Caco-2 (cell line): ENCODE measurements at regions of chrX and their contacts with region 1.

Region 1: GRCh38 chrX:40108959-40109287 is 11.2 kb upstream of the BCOR start:
- DNase-seq: peak in 1 of 2 experiments; percentile 61
- H3K4me3 ChIP-seq: peak overlapping the region; percentile 66
- H3K4me3 Mint-ChIP-seq: peak overlapping the region; percentile 76
- H3K27ac Mint-ChIP-seq: no peak overlapping the region
- H3K4me1 ChIP-seq: peaks cover 2% of the 10 kb centered on the region; the same call in 1 of the 2 replicates
- H3K4me1 Mint-ChIP-seq: peaks cover 6% of the 10 kb centered on the region
- H3K27me3 ChIP-seq: no peaks in the 10 kb centered on the region
- H3K27me3 Mint-ChIP-seq: no peaks in the 10 kb centered on the region
- CTCF ChIP-seq: no peak

Region 2: DNA sequence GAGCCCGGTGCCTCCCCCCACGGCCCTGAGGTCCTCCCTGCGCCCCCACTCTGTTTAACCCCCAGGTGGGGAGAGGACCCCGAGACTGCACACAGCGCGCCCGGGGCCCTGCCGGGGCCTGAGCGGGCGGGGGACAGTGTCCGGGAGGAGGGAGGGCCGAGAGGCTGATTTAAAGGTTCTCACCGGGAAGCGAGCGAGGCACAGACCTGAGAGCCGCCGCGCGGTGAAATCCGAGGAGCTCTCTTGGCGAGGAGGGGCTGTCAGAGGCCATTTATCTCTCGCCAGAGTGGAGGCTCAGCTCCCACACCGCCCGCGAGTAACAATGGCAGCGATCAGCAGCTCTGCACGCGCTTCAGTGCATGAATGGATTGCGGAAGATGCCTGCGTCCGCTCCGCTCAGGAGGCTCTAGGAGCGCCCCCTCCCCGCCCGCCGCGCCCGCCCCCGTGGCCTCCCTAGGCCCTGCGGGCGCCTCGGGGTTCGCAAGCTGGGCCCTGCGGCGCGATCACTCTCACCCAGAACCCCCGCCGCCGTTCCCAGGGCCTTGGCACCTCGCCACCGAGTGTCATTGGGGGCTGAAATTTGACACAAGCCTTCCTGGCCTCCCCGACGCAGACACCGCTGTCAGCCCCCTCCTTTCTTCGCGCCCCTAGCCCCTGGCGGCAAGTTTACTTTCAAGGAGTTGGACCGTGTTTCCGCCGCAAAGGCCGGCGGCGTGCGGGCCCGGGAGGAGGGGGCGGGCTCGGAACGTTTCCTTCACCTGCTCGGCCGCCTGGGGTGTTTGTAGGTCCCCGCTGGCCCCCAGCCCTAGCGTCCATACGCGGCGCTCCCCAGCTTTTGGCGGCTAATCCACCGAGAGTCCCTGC is 37.6 kb after region 1 on chrX:
- CTCF ChIA-PET with region 1: interaction called, 3 read pairs
- POLR2A ChIA-PET with region 1: no interaction called
- intact Hi-C with region 1: loop called (anchors 2 kb)
- DNase-seq: peak; percentile 41 to 50
- H3K4me3 ChIP-seq: peak overlapping the region; percentile 60
- H3K4me3 Mint-ChIP-seq: peak overlapping the region; percentile 73
- H3K27ac Mint-ChIP-seq: no peak overlapping the region
- H3K4me1 ChIP-seq: no peaks in the 10 kb centered on the region
- H3K4me1 Mint-ChIP-seq: no peaks in the 10 kb centered on the region
- H3K27me3 ChIP-seq: no peaks in the 10 kb centered on the region
- H3K27me3 Mint-ChIP-seq: no peaks in the 10 kb centered on the region
- CTCF ChIP-seq: no peak

Region 3: DNA sequence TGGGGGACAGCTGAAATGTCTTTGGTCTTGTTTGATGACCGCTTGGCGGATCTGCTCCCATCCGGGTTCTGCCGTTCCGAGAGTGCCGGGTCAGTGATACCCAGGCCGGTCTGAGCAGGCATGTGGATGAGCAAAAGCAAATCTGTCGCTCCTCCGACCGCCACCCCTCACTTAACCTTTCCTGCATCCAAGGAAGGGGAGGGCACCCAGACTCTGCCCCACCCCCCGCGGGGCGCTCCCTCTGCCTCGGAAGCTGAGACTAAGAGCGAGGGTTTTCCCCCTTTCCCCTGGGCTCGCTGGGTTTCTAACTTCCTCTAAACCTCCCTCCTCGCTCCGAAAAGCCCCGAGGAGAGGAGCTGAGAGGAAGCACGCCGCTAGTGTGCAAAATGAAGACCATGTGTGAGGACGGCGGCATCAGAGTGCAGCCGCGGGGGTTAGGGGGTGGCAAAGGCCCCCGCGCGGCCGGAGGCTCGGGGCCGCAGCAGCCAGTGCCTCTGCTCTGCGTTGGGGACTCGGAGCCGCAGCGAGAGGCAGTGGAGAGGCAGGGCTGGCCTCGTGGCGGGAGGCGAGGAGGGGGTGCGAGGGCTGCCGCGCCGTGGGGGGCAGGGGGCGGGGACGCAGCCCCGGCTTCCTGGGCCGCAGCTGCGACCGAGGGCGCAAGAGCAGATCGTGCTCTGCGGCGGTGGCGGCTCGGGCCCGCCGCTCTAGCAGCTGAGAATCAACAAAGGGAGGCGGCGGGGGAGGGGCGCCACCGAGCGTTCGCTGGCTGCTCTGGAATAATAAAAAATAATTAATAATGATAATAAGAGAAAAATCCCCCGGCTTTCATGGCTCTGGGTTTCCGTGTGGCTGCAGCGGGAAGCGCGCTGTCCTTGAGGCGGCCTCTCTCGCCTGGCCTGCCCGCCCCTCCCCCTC is 44.7 kb after region 1 on chrX:
- CTCF ChIA-PET with region 1: interaction called, 3 read pairs
- POLR2A ChIA-PET with region 1: no interaction called
- intact Hi-C with region 1: loop called (anchors 1 kb)
- DNase-seq: peak in 1 of 2 experiments; percentile 40
- H3K4me3 ChIP-seq: peak overlapping the region; percentile 41
- H3K4me3 Mint-ChIP-seq: peak overlapping the region; percentile 79
- H3K27ac Mint-ChIP-seq: no peak overlapping the region
- H3K4me1 ChIP-seq: 0 out of 2 replicates have a peak, but pooled peaks cover 6% of the 10 kb centered on the region
- H3K4me1 Mint-ChIP-seq: no peaks in the 10 kb centered on the region
- H3K27me3 ChIP-seq: no peaks in the 10 kb centered on the region
- H3K27me3 Mint-ChIP-seq: no peaks in the 10 kb centered on the region
- CTCF ChIP-seq: no peak

Region 4: GRCh38 chrX:41634284-41634683 is 1525.4 kb after region 1 on chrX:
- CTCF ChIA-PET with region 1: no interaction called
- POLR2A ChIA-PET with region 1: no interaction called
- intact Hi-C with region 1: no loop called
- DNase-seq: no peak
- H3K4me3 ChIP-seq: no peak overlapping the region
- H3K4me3 Mint-ChIP-seq: no peak overlapping the region
- H3K27ac Mint-ChIP-seq: no peak overlapping the region
- H3K4me1 ChIP-seq: no peaks in the 10 kb centered on the region
- H3K4me1 Mint-ChIP-seq: no peaks in the 10 kb centered on the region
- H3K27me3 ChIP-seq: no peaks in the 10 kb centered on the region
- H3K27me3 Mint-ChIP-seq: no peaks in the 10 kb centered on the region
- CTCF ChIP-seq: no peak